CD14-positive monocyte (primary cell): ENCODE measurements at regions of chr5 and their contacts with region 1.

Region 1: GRCh38 chr5:96614110-96614691 is 48.0 kb upstream of the CAST start:
- DNase-seq: peak; percentile 62 to 81 (median 80)
- H3K4me3 ChIP-seq: peak overlapping the region in 1 of 3 experiments; percentile 33
- H3K4me3 Mint-ChIP-seq: peak overlapping the region in 1 of 2 donors; percentile 23
- H3K27ac ChIP-seq: peak overlapping the region; percentile 29 to 75
- H3K27ac Mint-ChIP-seq: peak overlapping the region; percentile 74 to 94 (median 89)
- H3K4me1 ChIP-seq: peaks cover 19 to 21% of the 10 kb centered on the region in 2 donors
- H3K4me1 Mint-ChIP-seq: peaks cover 31% of the 10 kb centered on the region
- H3K27me3 ChIP-seq: peaks cover 5 to 7% of the 10 kb centered on the region in 2 donors
- H3K27me3 Mint-ChIP-seq: peaks cover 4 to 5% (median 5%) of the 10 kb centered on the region in 3 donors
- CTCF ChIP-seq: peak; percentile 75

Region 2: DNA sequence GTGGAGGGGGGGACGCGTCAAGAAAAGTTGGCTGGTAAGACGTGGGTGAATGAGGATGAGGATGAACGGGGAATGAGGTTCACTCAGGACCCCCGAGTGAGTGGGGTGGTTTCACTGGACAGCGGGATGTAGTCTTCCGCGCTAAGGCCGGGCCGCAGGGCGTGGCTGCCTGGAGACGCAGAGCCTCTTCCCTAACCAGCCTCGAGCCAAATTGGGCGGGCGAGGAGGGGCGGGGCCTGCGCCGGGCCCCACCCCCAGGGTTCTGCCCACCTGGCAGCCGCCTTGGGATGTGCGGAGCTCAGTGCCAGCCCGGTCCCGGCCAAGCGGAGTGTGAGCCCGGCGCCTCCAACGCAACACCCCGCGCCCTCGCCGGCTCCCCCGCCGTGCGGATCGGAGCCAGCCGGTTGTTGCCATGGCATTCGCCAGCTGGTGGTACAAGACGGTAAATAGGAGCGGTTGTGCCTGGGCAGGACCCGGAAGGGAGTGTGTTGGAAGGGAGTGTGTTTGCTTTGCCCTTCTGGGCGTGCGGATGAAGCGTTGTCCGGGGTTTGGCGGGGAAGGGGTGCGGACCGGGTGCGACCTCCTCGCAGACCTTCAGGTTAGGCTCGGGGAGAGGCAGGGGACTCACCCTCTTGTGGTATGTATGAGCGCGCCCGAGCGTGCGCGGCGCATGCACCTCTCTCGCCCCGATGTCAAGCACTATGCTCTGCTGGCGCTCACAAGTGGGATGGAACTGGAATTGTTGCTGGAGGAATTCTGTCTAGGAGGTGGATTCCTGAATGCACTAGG is 48.7 kb after region 1 on chr5:
- intact Hi-C with region 1: loop called (anchors 5 to 10 kb)
- DNase-seq: peak; percentile 71 to 80 (median 79)
- H3K4me3 ChIP-seq: peak overlapping the region; percentile 85 to 87 (median 86)
- H3K4me3 Mint-ChIP-seq: peak overlapping the region; percentile 98 to 99
- H3K27ac ChIP-seq: peak overlapping the region; percentile 89 to 91
- H3K27ac Mint-ChIP-seq: peak overlapping the region; percentile 97 to 99 (median 99)
- H3K4me1 ChIP-seq: peaks cover 44 to 68% of the 10 kb centered on the region in 2 donors
- H3K4me1 Mint-ChIP-seq: peaks cover 66% of the 10 kb centered on the region
- H3K27me3 ChIP-seq: no peaks in the 10 kb centered on the region
- H3K27me3 Mint-ChIP-seq: no peaks in the 10 kb centered on the region
- CTCF ChIP-seq: no peak

Region 3: GRCh38 chr5:96680759-96681470 is 66.7 kb after region 1 on chr5:
- intact Hi-C with region 1: loop called in 1 of 2 experiments (anchors 5 kb)
- DNase-seq: peak; percentile 31 to 68 (median 35)
- H3K4me3 ChIP-seq: no peak overlapping the region
- H3K4me3 Mint-ChIP-seq: no peak overlapping the region
- H3K27ac ChIP-seq: peak overlapping the region; percentile 14 to 46
- H3K27ac Mint-ChIP-seq: peak overlapping the region; percentile 58 to 79 (median 68)
- H3K4me1 ChIP-seq: peaks cover 4 to 19% of the 10 kb centered on the region in 2 donors
- H3K4me1 Mint-ChIP-seq: peaks cover 25% of the 10 kb centered on the region
- H3K27me3 ChIP-seq: no peaks in the 10 kb centered on the region
- H3K27me3 Mint-ChIP-seq: peaks cover 0 to 2% (median 0%) of the 10 kb centered on the region in 3 donors
- CTCF ChIP-seq: no peak

Region 4: GRCh38 chr5:96790961-96791504 is 176.8 kb after region 1 on chr5:
- intact Hi-C with region 1: no loop called
- DNase-seq: peak; percentile 35 to 77 (median 61)
- H3K4me3 ChIP-seq: no peak overlapping the region
- H3K4me3 Mint-ChIP-seq: no peak overlapping the region
- H3K27ac ChIP-seq: peak overlapping the region in 1 of 2 donors; percentile 59
- H3K27ac Mint-ChIP-seq: peak overlapping the region; percentile 41 to 92 (median 81)
- H3K4me1 ChIP-seq: peaks cover 7 to 9% of the 10 kb centered on the region in 2 donors
- H3K4me1 Mint-ChIP-seq: peaks cover 11% of the 10 kb centered on the region
- H3K27me3 ChIP-seq: no peaks in the 10 kb centered on the region
- H3K27me3 Mint-ChIP-seq: no peaks in the 10 kb centered on the region
- CTCF ChIP-seq: no peak